PC-3 (cell line): ENCODE measurements at regions of chr17 and their contacts with region 1.

Region 1: DNA sequence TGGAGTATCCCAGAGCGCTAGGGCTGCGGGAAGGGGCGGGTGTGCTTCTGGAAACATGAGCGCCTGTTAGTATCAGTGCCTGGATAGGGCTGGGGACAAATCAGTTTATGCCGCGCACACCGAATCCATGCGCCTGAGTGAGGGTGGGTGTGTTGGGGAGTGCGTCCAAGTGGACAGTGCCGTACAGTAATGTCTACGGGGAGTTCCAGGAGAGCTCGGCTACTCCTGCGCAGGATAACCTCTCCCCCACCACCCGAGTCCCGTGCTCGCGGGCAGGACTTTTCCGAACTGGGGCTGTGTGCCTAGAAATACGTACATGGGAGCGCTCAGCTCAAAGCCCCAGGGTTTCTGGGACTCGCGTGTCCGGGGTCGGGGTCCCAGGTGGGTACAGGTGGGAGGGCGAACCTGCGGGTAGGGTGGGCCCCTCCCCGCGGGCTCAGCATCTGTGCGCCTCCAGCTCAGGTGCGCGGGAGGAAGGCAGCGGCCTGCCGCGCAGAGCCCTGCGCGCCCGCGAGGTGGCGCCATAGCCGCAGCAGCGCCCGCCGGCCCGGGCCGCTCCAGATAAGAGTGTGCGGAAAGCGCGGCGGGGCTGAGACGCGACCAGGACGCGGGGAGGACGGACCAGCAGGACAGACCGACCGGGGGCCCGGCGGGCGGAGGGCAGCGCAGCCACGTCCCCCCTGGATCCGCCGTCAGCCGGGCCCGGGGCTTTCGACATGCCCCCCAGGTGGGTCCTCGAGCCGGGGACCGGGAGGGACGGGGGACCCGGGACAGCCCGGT is at the start of gene HIC1:
- DNase-seq: peak; percentile 75
- ATAC-seq: peak; percentile 76
- H3K4me3 ChIP-seq: peak within 1 kb of the TSS; percentile 66
- H3K27ac ChIP-seq: no peak within 1 kb of the TSS
- H3K4me1 ChIP-seq: peaks cover 7% of the 10 kb centered on the region
- H3K27me3 ChIP-seq: no peaks in the 10 kb centered on the region
- CTCF ChIP-seq: peak; percentile 77
- total RNA-seq, gene HIC1: 2.0 and 4.4 TPM in 2 replicates

Region 2: GRCh38 chr17:2244545-2245525 is 190.1 kb after region 1 on chr17:
- CTCF ChIA-PET with region 1: interaction called, 25 read pairs
- POLR2A ChIA-PET with region 1: no interaction called
- intact Hi-C with region 1: loop called (anchors 1 kb)
- DNase-seq: peak; percentile 76
- ATAC-seq: peak; percentile 69
- H3K4me3 ChIP-seq: no peak overlapping the region
- H3K27ac ChIP-seq: no peak overlapping the region
- H3K4me1 ChIP-seq: peaks cover 12% of the 10 kb centered on the region
- H3K27me3 ChIP-seq: no peaks in the 10 kb centered on the region
- CTCF ChIP-seq: peak; percentile 91